ENCODE measurements at regions of chr6 and their contacts with region 1.

Region 1: GRCh38 chr6:27753668-27754407 is 158.4 kb downstream of the OR2B2 start:
- DNase-seq: peak; percentile 93
- H3K4me3 Mint-ChIP-seq: peak overlapping the region; percentile 80
- H3K27ac Mint-ChIP-seq: peak overlapping the region; percentile 59
- H3K4me1 Mint-ChIP-seq: peaks cover 11% of the 10 kb centered on the region
- H3K27me3 Mint-ChIP-seq: no peaks in the 10 kb centered on the region
- CTCF ChIP-seq: no peak

Region 2: DNA sequence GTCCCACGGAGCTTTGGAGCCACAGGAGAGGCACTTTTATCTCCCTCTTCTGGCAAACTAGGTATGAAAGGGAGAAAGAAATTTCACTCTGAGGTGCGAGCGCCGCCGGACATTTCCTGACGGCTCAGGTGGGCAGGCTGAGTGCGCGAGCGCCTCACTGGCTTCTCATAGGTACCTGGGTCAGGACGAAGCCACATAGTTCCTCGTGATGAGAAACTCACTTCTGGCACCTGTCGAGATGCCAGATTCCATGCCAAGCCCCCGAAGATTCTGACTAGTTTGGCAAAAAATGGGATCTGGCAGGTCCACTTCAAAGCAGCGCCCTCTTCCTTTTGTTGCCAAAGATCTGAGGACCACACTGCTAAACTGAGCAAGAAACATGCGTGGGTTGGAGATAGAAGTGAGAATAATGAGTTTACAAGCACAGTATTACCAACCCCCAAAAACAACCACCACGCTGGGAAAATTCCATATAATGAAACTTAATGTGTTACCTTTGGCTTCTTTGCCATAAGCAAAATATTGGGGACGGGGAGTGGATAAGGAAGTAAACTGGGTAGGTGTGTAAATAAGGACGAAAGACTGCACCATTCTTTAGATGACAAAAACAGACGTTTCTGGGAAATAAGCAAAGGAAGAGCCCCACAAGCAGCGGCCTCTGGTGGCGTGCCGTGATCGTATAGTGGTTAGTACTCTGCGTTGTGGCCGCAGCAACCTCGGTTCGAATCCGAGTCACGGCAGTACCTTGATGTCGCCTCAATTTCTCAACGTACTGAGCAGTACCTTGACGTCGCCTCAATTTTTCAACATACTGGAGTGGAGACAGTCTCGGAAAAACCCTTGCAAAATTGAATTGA is 596.2 kb before region 1 on chr6:
- CTCF ChIA-PET with region 1: no interaction called
- POLR2A ChIA-PET with region 1: interaction called, 3 read pairs
- intact Hi-C with region 1: loop called (anchors 2 kb)
- DNase-seq: peak; percentile 66
- H3K4me3 Mint-ChIP-seq: peak overlapping the region; percentile 80
- H3K27ac Mint-ChIP-seq: peak overlapping the region; percentile 53
- H3K4me1 Mint-ChIP-seq: peaks cover 29% of the 10 kb centered on the region
- H3K27me3 Mint-ChIP-seq: no peaks in the 10 kb centered on the region
- CTCF ChIP-seq: peak; percentile 31

Region 3: DNA sequence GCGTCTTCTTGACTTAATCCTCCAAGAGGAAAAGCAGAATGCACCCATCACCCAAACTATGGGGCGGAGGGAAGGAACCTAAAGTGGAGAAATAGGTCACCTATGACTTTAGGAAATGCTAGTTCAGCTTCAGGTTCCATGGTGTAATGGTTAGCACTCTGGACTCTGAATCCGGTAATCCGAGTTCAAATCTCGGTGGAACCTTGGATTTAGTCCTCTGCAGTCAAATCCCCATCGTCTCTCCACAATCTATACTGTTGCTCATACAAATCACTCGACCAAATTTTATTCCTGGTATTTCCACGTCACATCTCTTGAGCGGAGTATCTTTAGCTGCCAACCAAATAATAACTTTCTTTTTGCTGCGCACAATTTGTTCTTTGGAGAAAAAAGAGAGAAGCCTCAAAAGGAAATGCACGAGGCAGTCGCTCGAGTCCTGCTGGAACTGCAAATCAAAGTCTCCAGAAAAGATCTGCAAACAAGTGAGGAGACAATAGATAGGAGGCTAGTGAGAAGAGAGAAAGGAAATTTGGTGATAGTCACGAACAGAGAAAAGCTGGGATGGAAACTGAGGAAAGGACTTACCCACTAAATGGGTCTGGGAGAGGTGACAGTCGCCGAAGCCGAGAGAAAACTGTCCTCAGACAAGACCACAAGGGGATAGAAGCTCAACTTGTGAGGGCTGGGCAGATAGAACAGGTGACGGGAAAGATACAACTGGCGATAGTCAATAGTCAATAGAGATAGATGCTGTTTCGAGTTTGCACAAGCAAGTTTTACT is 458.3 kb before region 1 on chr6:
- CTCF ChIA-PET with region 1: no interaction called
- POLR2A ChIA-PET with region 1: interaction called, 12 read pairs
- intact Hi-C with region 1: loop called (anchors 5 kb)
- DNase-seq: peak; percentile 87
- H3K4me3 Mint-ChIP-seq: peak overlapping the region; percentile 83
- H3K27ac Mint-ChIP-seq: peak overlapping the region; percentile 29
- H3K4me1 Mint-ChIP-seq: peaks cover 32% of the 10 kb centered on the region
- H3K27me3 Mint-ChIP-seq: no peaks in the 10 kb centered on the region
- CTCF ChIP-seq: no peak

Region 4: DNA sequence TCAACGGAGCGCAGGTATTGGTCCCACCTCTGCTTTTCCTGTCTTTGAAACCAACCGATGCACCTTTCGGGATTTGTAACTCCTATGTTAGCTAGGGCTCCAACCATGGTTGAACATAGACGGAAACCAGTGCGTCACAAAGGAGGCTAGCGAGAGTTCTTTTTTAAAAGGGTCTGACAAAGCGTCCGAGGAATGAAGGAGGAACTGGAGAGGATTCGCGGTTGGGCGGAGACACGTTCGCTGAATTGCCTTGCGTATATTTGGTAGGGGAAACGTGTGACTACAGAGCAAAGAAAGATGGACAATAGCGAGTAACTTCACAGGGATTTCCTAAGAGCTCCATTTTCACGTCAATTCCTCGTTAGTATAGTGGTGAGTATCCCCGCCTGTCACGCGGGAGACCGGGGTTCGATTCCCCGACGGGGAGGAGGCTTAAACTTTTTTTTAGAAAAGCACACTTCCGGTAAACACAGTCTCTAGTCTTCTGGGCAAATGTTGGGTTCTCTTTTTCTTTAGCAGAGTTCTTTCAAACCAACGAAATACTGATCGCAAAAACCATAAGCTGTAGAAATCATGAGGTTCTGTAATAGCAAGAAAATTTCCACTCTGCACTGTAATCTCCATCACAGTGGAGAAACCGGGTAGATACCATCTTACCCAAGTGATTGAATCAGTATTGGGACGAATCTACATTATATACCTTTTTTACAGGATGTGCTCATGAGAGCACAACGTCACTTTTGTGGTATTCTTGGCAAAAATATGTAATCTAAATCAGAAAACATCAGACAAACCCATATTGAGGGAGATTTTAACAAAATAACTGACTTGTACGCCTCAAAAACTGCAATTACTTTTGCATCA is 274.3 kb before region 1 on chr6:
- CTCF ChIA-PET with region 1: interaction called, 4 read pairs
- POLR2A ChIA-PET with region 1: interaction called, 10 read pairs
- intact Hi-C with region 1: loop called (anchors 5 kb)
- DNase-seq: peak; percentile 87
- H3K4me3 Mint-ChIP-seq: no peak overlapping the region
- H3K27ac Mint-ChIP-seq: no peak overlapping the region
- H3K4me1 Mint-ChIP-seq: no peaks in the 10 kb centered on the region
- H3K27me3 Mint-ChIP-seq: no peaks in the 10 kb centered on the region
- CTCF ChIP-seq: no peak

Region 5: DNA sequence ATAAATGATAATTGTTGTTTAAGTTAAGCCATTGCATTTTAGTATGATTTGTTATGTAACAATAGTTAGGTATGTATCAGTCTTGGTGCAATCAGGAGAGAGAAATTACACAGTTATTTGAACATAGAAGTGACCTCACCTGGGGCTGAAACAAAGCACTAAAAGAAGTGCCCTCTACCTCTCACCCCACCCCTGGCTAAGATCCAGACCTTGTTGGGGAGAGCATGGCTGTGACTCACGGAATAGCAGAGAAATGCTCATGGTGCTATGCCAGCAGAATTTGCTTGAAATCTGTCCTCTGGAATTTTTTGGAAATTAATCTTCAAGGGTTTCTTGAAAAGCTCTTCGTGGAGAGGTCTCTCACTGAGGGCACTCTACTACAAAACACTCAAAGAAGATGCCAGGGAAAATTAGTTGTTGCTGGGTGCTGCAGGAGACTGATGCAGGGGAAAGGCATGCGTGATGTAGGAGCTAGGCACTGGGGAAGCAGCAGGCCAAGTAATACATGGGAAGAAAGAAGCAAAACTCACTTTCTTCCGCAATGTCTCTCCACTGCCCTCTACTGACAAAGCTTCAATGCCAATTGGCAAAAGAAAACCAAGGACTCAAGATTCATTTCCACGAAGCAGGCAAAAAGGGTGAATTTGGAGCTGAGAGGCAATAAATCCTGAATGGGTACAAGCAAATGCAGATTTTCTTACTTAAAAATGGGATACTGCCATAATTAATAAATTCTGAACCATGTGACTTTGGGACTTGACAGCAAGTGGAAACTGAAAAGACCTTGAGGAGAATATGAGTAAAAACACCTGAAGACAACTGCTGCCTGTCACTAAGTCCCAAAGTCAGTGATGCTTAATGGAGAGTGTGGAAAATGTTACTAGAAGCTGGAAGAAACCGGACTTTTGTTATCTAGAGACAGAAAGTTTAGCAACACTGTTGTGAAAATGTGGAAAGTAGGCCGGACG is 144.6 kb before region 1 on chr6:
- CTCF ChIA-PET with region 1: interaction called, 4 read pairs
- POLR2A ChIA-PET with region 1: interaction called, 4 read pairs
- intact Hi-C with region 1: loop called (anchors 5 kb)
- DNase-seq: peak; percentile 89
- H3K4me3 Mint-ChIP-seq: peak overlapping the region; percentile 47
- H3K27ac Mint-ChIP-seq: peak overlapping the region; percentile 83
- H3K4me1 Mint-ChIP-seq: peaks cover 22% of the 10 kb centered on the region
- H3K27me3 Mint-ChIP-seq: no peaks in the 10 kb centered on the region
- CTCF ChIP-seq: peak; percentile 77

Region 6: DNA sequence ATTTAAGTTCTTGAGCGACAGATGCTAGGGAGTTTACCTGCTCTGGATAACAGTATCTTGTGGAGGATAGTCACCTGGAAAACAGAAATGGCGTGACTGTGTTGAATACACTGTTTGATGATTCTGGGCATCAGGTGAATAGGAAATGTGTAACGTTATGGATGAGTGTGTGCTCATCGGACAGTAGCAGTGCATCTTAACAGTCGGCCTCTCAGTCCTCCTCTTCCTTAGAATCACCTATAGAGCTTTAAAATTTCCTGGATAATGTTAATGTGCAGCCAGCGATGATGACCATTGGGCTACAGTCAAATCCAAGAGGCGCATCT is 59.3 kb before region 1 on chr6:
- CTCF ChIA-PET with region 1: interaction called, 7 read pairs
- POLR2A ChIA-PET with region 1: interaction called, 18 read pairs
- intact Hi-C with region 1: loop called (anchors 1 kb)
- DNase-seq: no peak
- H3K4me3 Mint-ChIP-seq: peak overlapping the region; percentile 76
- H3K27ac Mint-ChIP-seq: peak overlapping the region; percentile 69
- H3K4me1 Mint-ChIP-seq: peaks cover 13% of the 10 kb centered on the region
- H3K27me3 Mint-ChIP-seq: no peaks in the 10 kb centered on the region
- CTCF ChIP-seq: no peak